Psoas muscle (tissue), 8 donors: ENCODE measurements at regions of chr15 and their contacts with region 1.

Region 1: DNA sequence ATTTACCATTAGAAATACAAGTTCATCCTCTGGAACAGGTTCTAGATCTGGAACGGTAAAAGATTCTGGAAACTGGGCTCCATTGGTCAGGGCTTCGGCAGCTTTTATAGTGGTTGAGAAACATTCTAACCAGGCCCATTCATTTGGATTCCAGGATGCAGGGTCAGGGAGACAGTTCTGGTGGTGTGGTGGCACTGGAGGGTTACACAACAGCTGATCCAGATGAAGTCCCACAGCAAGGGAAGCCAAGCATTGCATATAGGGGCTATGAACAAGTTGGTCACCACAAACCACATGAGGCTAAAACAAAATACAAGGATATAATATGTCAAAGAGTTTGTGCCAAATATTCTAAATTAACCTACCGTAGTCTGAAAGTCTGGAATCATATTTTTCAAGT is 43.0 kb downstream of the FBXL22 start:
- DNase-seq: no peak
- ATAC-seq: peak in 1 of 4 donors; percentile 32
- H3K4me3 ChIP-seq: no peak overlapping the region
- H3K27ac ChIP-seq: no peak overlapping the region
- H3K4me1 ChIP-seq: no peaks in the 10 kb centered on the region
- H3K27me3 ChIP-seq: no peaks in the 10 kb centered on the region
- CTCF ChIP-seq: no peak

Region 2: DNA sequence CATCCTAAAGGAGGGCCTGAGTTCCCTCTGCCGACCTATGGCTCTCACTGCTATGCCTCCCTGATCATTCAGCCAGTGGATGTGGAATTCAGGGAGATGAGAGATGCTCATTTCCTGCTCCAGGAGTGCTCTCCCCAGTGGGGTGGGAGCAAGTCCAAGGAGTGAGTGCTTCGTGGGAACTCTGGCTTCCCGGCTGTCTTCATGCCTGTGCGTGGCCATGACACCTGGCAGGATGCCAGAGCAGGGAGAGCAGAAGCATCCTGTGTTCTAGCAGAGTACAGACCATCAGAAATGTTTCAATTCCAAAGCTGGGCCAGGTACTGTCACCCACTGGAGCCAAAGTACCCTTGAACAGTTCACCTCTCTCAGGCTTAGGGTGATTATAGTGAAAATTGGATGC is 317.6 kb before region 1 on chr15:
- intact Hi-C with region 1: no loop called
- DNase-seq: peak in 1 of 2 donors; percentile 37
- ATAC-seq: no peak
- H3K4me3 ChIP-seq: no peak overlapping the region
- H3K27ac ChIP-seq: no peak overlapping the region
- H3K4me1 ChIP-seq: no peaks in the 10 kb centered on the region
- H3K27me3 ChIP-seq: no peaks in the 10 kb centered on the region
- CTCF ChIP-seq: no peak

Region 3: DNA sequence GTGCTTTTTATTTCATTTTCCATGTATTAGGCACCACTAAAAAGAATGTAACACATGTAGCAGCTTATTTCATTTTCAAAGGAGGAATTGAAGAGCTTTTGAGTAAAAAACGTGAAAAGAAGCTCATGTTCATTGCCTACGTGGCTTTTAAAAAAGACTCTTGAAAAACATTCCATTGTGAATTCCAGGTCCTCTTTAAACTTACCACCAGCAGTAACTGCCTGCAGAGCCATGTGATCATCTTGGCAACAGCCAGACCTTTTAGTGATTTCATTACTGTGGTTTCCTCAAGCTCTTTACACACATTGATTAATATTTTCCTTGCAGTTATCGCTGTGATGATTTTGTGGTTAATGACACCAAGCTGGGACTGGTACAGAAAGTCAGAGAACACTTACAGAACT is 86.8 kb before region 1 on chr15:
- intact Hi-C with region 1: no loop called
- DNase-seq: no peak
- ATAC-seq: peak; percentile 53 to 58 (median 56)
- H3K4me3 ChIP-seq: no peak overlapping the region
- H3K27ac ChIP-seq: peak overlapping the region; percentile 50
- H3K4me1 ChIP-seq: peaks cover 6% of the 10 kb centered on the region
- H3K27me3 ChIP-seq: no peaks in the 10 kb centered on the region
- CTCF ChIP-seq: no peak

Region 4: DNA sequence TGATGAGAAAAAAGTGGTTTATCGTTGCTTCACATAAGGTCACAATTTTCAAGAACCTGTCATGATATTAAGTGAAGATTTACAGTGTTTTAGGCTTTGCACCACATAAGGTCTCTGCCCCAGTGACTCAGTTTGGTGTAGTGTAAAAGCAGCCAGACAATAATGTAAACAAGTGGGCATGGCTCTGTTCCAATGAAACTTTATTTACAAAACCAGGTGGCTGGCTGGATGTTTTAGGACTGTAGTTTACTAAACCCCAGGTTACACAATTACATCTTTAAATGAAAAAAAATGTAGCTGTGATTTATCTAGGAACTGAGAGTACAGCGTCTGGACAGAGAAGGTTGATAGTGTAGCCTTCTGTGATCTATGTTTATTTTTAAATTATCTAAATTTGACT is 52.6 kb before region 1 on chr15:
- intact Hi-C with region 1: no loop called
- DNase-seq: no peak
- ATAC-seq: no peak
- H3K4me3 ChIP-seq: no peak overlapping the region
- H3K27ac ChIP-seq: no peak overlapping the region
- H3K4me1 ChIP-seq: no peaks in the 10 kb centered on the region
- H3K27me3 ChIP-seq: no peaks in the 10 kb centered on the region
- CTCF ChIP-seq: no peak

Region 5: GRCh38 chr15:63686352-63686751 is 46.2 kb after region 1 on chr15:
- intact Hi-C with region 1: loop called (anchors 5 kb)
- DNase-seq: no peak
- ATAC-seq: no peak
- H3K4me3 ChIP-seq: no peak overlapping the region
- H3K27ac ChIP-seq: no peak overlapping the region
- H3K4me1 ChIP-seq: no peaks in the 10 kb centered on the region
- H3K27me3 ChIP-seq: no peaks in the 10 kb centered on the region
- CTCF ChIP-seq: no peak

Region 6: GRCh38 chr15:63694184-63694583 is 54.0 kb after region 1 on chr15:
- intact Hi-C with region 1: loop called (anchors 5 kb)
- DNase-seq: no peak
- ATAC-seq: no peak
- H3K4me3 ChIP-seq: no peak overlapping the region
- H3K27ac ChIP-seq: no peak overlapping the region
- H3K4me1 ChIP-seq: no peaks in the 10 kb centered on the region
- H3K27me3 ChIP-seq: no peaks in the 10 kb centered on the region
- CTCF ChIP-seq: no peak

Region 7: GRCh38 chr15:63735449-63735848 is 95.3 kb after region 1 on chr15:
- intact Hi-C with region 1: loop called in 1 of 2 experiments (anchors 5 kb)
- DNase-seq: no peak
- ATAC-seq: no peak
- H3K4me3 ChIP-seq: no peak overlapping the region
- H3K27ac ChIP-seq: no peak overlapping the region
- H3K4me1 ChIP-seq: no peaks in the 10 kb centered on the region
- H3K27me3 ChIP-seq: no peaks in the 10 kb centered on the region
- CTCF ChIP-seq: no peak